ENCODE measurements at regions of chr21 and their contacts with region 1.

Region 1: DNA sequence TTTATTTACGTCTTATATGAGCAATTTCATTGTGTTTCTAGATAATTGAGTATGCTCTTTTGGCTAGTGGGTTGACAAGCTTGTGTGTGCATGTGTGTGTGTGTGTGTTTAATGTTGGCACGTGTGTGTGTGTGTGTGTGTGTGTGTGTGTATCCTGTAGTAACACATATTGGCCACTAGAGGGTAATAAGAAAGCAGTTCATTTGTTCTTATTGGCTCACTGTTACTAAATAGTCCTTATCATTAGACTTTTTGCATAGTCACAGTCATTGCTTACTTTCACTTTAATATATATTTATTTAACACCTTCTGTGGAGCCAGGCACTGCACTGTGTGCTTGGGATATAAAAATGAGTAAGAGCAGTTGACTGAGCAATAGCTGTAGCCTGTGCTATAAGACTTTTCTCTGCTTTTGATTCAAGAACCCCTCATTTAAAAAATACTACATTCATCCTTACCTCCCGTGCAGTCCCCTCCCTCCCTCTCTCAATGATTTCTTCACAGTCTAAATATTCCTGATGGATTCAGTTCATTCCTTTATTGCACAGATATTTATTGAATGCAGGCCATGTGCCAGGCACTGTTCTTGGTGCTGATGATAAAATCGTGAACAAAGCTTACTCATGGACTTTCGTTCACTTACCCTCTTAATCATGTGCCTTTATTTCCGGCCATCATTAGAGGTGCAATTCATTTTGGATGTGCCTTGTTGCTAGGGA is 96.7 kb downstream of the DYRK1A start:
- DNase-seq: peak; percentile 73 to 87 (median 79)
- H3K4me3 ChIP-seq: peak overlapping the region in 4 of 7 experiments; percentile 1 to 43 (median 33)
- H3K27ac ChIP-seq: peak overlapping the region in 1 of 2 experiments; percentile 47
- H3K4me1 ChIP-seq: peaks cover 18 to 36% (median 28%) of the 10 kb centered on the region in 4 experiments
- H3K27me3 ChIP-seq: no peaks in the 10 kb centered on the region

Region 2: DNA sequence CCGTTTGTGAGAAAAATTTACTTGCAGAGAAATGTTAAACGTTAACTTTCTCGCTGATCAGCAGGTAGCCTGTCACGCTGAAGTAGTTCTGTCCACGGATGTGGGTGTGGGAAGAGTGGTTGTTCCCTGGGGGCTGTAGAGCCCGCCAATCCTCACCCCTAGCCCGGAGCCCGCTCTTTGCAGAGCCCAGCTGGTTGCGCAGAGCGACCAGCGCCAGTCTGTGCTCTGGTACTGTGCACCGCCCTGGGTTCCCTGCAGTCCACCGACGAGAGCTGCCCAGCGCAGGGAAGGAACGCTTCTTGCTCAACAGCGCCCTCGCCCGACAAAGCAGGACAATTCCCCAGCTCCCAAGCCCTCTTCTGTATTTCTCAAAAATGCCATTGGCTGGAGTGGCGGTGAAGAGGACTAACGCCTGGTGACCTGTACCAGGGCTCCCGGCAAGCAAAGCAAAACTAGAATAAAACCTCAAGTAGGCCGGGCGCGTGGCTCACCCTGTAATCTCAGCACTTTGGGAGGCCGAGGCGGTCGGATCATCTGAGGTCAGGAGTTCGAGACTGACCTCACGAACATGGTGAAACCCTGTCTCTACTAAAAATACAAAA is 453.4 kb before region 1 on chr21:
- CTCF ChIA-PET with region 1: no interaction called
- POLR2A ChIA-PET with region 1: no interaction called
- DNase-seq: peak; percentile 82 to 89 (median 85)
- H3K4me3 ChIP-seq: peak overlapping the region in 6 of 7 experiments; percentile 32 to 68 (median 55)
- H3K27ac ChIP-seq: no peak overlapping the region
- H3K4me1 ChIP-seq: peaks cover 0 to 20% (median 18%) of the 10 kb centered on the region in 4 experiments
- H3K27me3 ChIP-seq: peaks cover 4 to 48% (median 12%) of the 10 kb centered on the region in 5 experiments

Region 3: DNA sequence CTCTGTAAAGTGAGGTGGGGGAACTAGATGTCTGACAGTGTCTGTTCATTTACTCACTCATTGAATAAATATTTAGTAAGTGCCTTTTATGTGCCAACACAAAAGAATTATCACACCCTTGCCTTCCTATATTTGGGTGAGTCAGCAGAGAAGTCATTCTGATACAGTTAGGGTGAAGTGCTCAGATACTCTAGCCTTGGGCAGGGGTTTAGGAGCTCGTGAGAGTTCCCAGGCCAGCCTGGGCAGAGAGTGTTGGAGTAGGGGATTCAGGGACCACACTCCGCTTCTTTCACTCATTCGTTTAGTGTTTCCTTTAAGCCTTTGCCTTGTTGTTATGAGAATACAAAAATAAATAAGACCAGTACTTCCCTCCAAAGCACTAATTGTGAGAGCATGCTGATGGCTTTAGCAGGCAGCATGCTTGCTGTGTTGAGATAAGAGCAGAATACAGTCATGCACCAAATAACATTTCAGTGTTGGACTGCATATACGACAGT is 12.7 kb before region 1 on chr21:
- CTCF ChIA-PET with region 1: interaction called, 10 read pairs
- POLR2A ChIA-PET with region 1: no interaction called
- DNase-seq: peak in 1 of 3 donors; percentile 38
- H3K4me3 ChIP-seq: no peak overlapping the region
- H3K27ac ChIP-seq: no peak overlapping the region
- H3K4me1 ChIP-seq: peaks cover 5 to 45% (median 26%) of the 10 kb centered on the region in 4 experiments
- H3K27me3 ChIP-seq: no peaks in the 10 kb centered on the region

Region 4: DNA sequence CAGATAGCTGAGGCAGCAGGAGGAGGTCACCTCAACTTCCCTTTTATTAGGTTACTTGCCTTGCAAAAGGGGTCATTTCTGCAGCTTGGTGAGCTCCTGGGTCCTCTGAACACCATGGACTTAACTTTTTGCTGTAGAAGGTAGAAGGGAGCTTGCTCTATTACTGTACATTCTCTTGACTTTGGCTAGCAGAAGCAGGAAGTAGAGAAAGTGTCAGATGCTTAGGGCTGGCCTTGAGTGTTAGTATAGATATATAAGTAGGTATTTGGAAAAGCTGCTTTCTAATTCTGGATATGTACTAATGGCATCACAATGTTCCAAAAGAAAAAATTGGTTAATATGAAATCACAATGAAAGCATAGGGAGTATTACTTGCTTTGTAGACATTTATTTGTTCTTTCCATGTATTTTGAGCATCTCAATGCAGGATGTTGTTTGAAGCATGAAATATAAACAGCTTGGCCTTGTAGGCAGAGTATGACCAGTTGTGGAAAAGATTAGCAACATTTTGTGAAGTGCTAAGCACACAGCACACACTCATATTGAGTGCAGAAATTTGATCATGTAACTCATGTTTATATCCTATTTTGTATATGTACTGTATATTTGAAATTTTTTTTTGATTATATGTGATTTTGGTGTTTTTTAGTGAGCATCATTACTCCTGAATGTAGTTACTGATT is 12.1 kb after region 1 on chr21:
- CTCF ChIA-PET with region 1: interaction called, 21 read pairs
- POLR2A ChIA-PET with region 1: interaction called, 3 read pairs
- DNase-seq: no peak
- H3K4me3 ChIP-seq: no peak overlapping the region
- H3K27ac ChIP-seq: no peak overlapping the region
- H3K4me1 ChIP-seq: peaks cover 0 to 7% (median 3%) of the 10 kb centered on the region in 4 experiments
- H3K27me3 ChIP-seq: no peaks in the 10 kb centered on the region

Region 5: GRCh38 chr21:37642493-37642892 is 179.3 kb after region 1 on chr21:
- CTCF ChIA-PET with region 1: no interaction called
- POLR2A ChIA-PET with region 1: no interaction called
- DNase-seq: peak; percentile 17 to 44 (median 32)
- H3K4me3 ChIP-seq: no peak overlapping the region
- H3K27ac ChIP-seq: no peak overlapping the region
- H3K4me1 ChIP-seq: no peaks in the 10 kb centered on the region
- H3K27me3 ChIP-seq: peaks cover 0 to 20% (median 10%) of the 10 kb centered on the region in 5 experiments